HCT116 (cell line): ENCODE measurements at regions of chr7 and their contacts with region 1.

Region 1: DNA sequence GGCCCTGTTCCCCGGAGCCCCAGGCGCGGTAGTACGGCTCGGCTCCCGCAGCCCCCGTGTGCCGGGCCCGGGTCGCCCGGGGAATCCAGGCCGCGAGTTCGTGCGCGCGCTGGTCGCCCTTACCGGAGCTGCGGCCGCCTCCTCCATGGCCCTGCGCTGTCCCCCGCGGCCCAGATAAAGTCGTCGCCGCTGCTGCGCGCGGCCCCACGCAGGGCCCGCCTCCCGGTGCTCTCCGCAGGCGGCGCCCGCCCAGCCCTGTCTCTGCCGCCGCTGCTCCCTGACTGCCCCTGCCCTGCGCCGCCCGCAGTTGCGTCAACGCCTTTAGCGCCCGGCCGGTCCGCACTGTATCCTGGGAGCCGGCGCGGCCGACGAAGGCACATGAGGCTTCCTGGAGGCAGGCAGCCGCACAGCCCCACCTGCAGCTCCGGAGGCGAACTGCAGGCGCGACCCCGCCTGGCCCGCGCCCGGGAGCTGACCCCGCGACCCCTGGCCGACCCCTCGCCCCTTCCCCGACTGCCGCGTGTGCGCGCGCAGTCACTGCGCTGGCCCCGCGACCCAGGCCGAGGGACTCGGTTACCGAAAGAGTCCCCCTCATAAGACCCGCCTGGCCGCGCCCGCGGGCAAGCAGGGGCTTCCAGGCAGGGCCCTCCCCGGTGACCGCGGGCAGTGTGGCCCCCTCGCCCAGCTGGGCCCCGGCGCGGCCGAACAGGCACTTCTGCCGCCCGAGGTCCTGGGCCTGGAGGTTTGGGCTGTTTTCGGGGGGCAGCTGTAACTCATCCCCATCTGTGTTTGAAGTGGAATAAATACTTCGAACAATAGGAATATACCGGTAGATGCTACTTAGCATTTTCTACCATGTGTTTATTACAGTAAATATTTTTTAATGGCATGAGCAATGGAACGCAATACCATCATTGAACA is 127.1 kb upstream of the ZNF746 start:
- DNase-seq: peak; percentile 81
- ATAC-seq: peak; percentile 94
- H3K4me3 ChIP-seq: peak overlapping the region; percentile 64 to 86
- H3K27ac ChIP-seq: peak overlapping the region; percentile 84
- H3K4me1 ChIP-seq: peaks cover 5 to 19% of the 10 kb centered on the region in 2 experiments; a peak in 3 of 4 replicates
- H3K27me3 ChIP-seq: no peaks in the 10 kb centered on the region
- CTCF ChIP-seq: peak; percentile 62 to 77 (median 74)
- POLR2A ChIP-seq: peak; percentile 51
- RAD21 ChIP-seq: peak; percentile 21; the same call in 1 of the 2 replicates

Region 2: DNA sequence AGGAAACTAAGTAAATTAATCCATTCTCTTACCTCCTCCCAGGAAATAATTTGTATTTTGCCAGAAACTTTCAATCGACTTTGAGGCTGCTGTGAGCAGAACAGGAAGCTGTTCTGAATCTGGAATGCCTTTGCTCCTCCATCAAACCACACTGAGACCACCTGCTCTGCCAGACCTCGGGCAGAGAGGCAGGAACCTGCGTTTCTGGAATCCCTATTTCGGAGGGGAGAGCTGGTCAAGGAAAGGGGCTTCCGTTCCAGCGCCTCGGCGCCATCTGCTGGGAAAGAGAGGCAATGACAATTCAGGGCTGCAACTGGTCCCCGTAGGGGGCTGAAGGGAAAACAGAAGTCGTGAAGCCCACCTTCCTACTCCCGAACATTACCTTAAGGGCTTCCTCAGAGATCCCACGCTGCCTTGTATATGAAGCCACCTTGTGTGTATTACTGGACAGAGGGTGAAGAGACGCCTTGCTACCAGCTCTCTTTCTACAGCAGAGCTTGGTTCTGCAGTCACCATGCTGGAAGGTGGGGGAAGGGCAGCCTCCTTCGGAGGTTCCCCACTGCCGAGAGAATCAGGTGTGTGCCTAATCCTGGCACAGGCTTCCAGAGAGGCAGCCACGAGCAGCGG is 117.5 kb after region 1 on chr7:
- CTCF ChIA-PET with region 1: interaction called, 11 read pairs
- POLR2A ChIA-PET with region 1: no interaction called
- RAD21 ChIA-PET with region 1: no interaction called
- intact Hi-C with region 1: loop called (anchors 2 kb)
- DNase-seq: peak; percentile 47
- ATAC-seq: peak; percentile 95
- H3K4me3 ChIP-seq: peak overlapping the region; percentile 51 to 57
- H3K27ac ChIP-seq: no peak overlapping the region
- H3K4me1 ChIP-seq: peaks cover 5 to 13% of the 10 kb centered on the region in 2 experiments; a peak in 3 of 4 replicates
- H3K27me3 ChIP-seq: no peaks in the 10 kb centered on the region
- CTCF ChIP-seq: peak; percentile 88 to 92 (median 92)
- POLR2A ChIP-seq: no peak
- RAD21 ChIP-seq: peak; percentile 89

Region 3: DNA sequence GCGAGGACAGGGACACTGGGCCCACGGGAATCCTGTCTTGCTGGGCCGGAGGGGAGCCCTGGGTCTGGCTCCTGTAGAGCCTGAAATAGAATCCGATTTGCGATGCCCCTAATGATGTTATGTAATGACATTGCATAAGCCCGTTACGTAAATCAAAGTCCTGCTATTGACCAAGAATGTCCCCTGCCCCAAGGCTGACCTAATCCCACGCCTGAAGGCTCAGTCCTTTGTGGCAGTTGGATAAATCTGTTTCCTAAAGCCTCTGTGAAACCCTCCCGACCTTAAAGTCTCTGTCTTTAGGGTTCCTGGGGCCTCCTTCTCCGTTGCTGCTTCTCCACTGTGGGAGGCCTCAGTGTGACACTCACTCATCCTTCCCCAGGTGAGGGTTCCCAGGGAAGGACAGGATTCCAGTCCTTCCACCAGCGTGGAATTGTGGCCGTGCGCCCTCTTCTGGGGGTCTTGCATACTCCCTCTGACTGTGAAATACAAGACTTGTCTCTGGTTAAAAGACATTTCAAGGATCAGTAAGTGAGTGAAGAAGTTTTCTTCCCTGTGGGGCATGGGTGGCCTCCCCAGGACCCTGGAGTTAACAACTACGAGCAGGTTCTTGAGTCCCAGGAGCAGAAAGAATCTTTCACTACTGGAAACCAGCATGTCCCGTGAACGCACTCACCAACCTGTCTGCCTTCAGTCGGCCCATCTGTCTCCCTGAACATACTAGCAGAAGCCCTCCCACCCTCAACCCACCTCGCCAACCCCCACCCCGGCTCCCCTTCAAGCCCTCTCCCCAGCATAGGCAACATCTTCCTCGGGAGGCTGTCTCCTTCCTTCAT is 128.9 kb after region 1 on chr7:
- CTCF ChIA-PET with region 1: no interaction called
- POLR2A ChIA-PET with region 1: no interaction called
- RAD21 ChIA-PET with region 1: no interaction called
- intact Hi-C with region 1: loop called (anchors 1 kb)
- DNase-seq: peak; percentile 36
- ATAC-seq: peak; percentile 95
- H3K4me3 ChIP-seq: no peak overlapping the region
- H3K27ac ChIP-seq: no peak overlapping the region
- H3K4me1 ChIP-seq: 0 out of 4 replicates have a peak, but pooled peaks cover 0 to under 1% of the 10 kb centered on the region in 2 experiments
- H3K27me3 ChIP-seq: no peaks in the 10 kb centered on the region
- CTCF ChIP-seq: peak; percentile 79 to 85 (median 85)
- POLR2A ChIP-seq: no peak
- RAD21 ChIP-seq: peak; percentile 78